ENCODE measurements at regions of chr21 and their contacts with region 1.

Region 1: DNA sequence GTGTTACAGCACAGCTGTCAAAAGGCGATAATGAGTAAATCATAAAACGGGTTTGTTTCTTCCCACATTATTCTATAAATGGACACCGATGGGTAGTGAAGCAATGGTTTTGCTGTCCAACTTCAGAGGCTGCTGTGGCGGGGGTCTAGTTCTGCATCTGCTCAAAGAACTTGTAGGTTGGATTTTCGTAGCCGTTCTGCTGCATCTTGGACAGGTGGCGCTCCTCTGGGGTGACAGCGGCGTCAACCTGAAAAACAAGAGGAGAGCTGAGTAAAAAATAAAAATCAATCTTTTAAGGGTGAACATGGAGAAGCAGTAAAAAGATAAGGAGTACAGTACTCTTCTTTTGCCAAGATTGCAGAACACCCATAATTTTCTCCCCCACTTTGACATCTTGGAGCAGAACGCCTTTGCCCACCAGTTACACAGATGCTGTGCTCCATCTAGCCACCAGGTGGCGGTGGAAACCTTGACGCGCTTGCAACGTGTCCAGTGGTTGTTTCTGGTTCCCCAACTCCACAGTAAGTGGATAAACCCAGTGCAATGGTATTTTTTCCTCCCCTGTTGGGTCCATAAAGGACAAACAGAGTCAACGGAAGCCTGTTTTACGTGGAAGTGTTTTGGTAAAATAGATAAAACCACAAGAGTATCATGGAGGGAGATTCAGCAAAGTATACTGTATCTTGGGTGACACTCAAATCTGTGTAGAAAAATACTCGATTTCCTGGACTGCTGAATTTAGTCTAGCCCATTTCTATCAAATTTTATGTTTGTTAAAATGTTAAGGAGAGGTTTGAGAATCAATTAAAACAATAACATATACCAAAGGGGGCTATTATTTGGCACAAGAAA is 147.0 kb downstream of the GABPA start:
- DNase-seq: peak; percentile 10 to 27
- ATAC-seq: peak in 1 of 2 donors; percentile 75
- H3K4me3 ChIP-seq: no peak overlapping the region
- H3K27ac ChIP-seq: no peak overlapping the region
- H3K4me1 ChIP-seq: no peaks in the 10 kb centered on the region
- H3K27me3 ChIP-seq: no peaks in the 10 kb centered on the region
- CTCF ChIP-seq: peak; percentile 78 to 91 (median 82)
- POLR2A ChIP-seq: no peak

Region 2: GRCh38 chr21:25826652-25827051 is 55.1 kb before region 1 on chr21:
- in situ Hi-C with region 1: no loop called
- intact Hi-C with region 1: no loop called
- DNase-seq: no peak
- ATAC-seq: no peak
- H3K4me3 ChIP-seq: no peak overlapping the region
- H3K27ac ChIP-seq: no peak overlapping the region
- H3K4me1 ChIP-seq: no peaks in the 10 kb centered on the region
- H3K27me3 ChIP-seq: no peaks in the 10 kb centered on the region
- CTCF ChIP-seq: no peak
- POLR2A ChIP-seq: no peak

Region 3: DNA sequence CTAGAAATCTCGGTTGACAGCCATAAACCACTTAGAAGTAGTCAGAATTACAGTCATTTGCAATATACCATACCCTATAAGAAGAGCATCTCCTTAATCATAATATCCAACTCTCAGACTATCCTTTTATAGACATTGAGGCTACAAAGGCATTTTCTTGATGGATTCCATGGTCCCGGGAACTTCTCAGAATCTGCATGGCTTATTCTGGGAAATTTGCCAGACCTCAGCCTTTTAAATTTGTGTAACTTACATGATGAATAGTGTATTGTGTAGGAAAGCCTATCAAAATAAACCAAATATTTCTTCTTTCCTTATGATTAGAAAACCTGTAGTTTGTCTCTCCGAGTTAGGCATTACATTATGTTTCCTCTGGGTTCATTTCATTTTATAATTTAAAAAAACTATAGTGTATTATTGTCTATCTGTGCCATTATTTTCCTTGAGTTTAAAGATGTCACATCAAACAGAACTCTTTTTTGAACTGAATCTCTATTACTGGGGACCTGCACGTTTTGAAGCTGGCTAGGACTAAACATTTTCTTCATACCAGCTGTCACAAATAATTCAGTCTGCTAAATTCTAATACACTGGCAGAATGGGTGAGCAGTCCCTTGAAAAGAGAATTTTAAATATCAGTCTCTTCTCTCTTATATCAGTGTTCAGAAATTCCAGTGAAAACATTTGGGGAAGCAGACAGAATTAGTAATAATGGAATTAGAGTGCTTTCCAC is 44.1 kb before region 1 on chr21:
- in situ Hi-C with region 1: no loop called
- intact Hi-C with region 1: no loop called
- DNase-seq: no peak
- ATAC-seq: no peak
- H3K4me3 ChIP-seq: no peak overlapping the region
- H3K27ac ChIP-seq: no peak overlapping the region
- H3K4me1 ChIP-seq: no peaks in the 10 kb centered on the region
- H3K27me3 ChIP-seq: no peaks in the 10 kb centered on the region
- CTCF ChIP-seq: no peak
- POLR2A ChIP-seq: no peak

Region 4: GRCh38 chr21:25850126-25850842 is 31.5 kb before region 1 on chr21:
- in situ Hi-C with region 1: no loop called
- intact Hi-C with region 1: no loop called
- DNase-seq: no peak
- ATAC-seq: no peak
- H3K4me3 ChIP-seq: no peak overlapping the region
- H3K27ac ChIP-seq: no peak overlapping the region
- H3K4me1 ChIP-seq: no peaks in the 10 kb centered on the region
- H3K27me3 ChIP-seq: no peaks in the 10 kb centered on the region
- CTCF ChIP-seq: no peak
- POLR2A ChIP-seq: no peak

Region 5: DNA sequence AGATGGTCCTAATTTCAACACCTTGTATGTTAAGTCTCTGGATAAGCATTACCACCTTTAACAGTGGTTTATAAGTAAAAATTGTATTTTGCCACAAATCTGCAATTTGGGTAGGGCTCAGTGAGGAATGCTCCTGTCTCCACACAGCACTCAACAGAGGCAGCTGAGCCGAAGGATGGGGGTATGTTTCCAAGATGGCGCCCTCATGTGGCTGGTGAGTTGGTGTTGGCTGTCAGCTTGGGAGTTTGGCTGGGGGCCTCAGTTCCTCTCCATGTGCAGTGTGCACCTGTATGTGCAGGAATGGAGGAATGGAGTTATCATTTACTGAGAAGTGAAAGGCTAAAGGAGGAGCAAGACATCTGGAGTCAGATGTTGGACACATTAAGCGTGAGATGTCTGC is 10.2 kb before region 1 on chr21:
- in situ Hi-C with region 1: no loop called
- intact Hi-C with region 1: no loop called
- DNase-seq: no peak
- ATAC-seq: no peak
- H3K4me3 ChIP-seq: no peak overlapping the region
- H3K27ac ChIP-seq: no peak overlapping the region
- H3K4me1 ChIP-seq: no peaks in the 10 kb centered on the region
- H3K27me3 ChIP-seq: no peaks in the 10 kb centered on the region
- CTCF ChIP-seq: no peak
- POLR2A ChIP-seq: no peak

Region 6: GRCh38 chr21:26715878-26716506 is 834.2 kb after region 1 on chr21:
- in situ Hi-C with region 1: loop called (anchors 10 to 25 kb)
- intact Hi-C with region 1: no loop called
- DNase-seq: no peak
- ATAC-seq: peak; percentile 34 to 78
- H3K4me3 ChIP-seq: no peak overlapping the region
- H3K27ac ChIP-seq: no peak overlapping the region
- H3K4me1 ChIP-seq: peaks cover 0 to 7% of the 10 kb centered on the region in 2 donors
- H3K27me3 ChIP-seq: no peaks in the 10 kb centered on the region
- CTCF ChIP-seq: peak in 4 of 5 experiments; percentile 50 to 86 (median 70)
- POLR2A ChIP-seq: no peak